Adrenal gland (tissue), 19 donors: ENCODE measurements at regions of chr5 and their contacts with region 1.

Region 1: DNA sequence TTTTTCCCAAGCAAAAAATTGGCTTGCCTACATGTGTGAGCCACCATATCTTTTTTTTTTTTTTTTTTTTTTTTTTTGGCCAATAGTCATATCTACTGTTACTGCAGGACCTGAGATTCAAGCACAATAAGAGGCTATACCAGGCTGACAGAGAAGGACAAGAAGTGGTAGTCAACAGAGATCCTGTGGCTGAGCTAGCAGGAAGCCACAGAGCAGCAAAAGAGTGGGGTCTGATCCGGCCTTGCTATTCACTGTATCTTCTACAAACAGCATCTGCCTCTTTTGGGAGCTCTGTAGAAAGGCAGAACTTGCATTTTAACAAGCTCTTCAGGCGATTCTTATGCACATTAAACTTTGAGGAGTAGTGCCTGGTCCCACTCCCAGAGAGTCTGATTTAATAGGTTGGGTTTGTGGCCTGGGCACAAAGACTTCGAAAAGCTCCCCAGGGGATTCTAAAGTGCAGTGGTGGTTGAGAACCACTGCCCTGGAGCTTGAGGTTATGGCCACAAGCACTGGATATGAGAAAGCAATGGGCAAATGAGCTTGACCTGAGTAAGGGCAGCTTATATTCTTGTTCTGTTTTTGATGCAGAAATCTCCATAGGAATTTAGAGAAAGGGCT is 162.8 kb downstream of the PIK3R1 start:
- DNase-seq: no peak
- H3K4me3 ChIP-seq: no peak overlapping the region
- H3K27ac ChIP-seq: no peak overlapping the region
- H3K4me1 ChIP-seq: no peaks in the 10 kb centered on the region
- H3K27me3 ChIP-seq: no peaks in the 10 kb centered on the region
- CTCF ChIP-seq: no peak
- POLR2A ChIP-seq: no peak

Region 2: GRCh38 chr5:67921004-67921601 is 457.2 kb before region 1 on chr5:
- intact Hi-C with region 1: no loop called
- DNase-seq: no peak
- H3K4me3 ChIP-seq: no peak overlapping the region
- H3K27ac ChIP-seq: no peak overlapping the region
- H3K4me1 ChIP-seq: no peaks in the 10 kb centered on the region
- H3K27me3 ChIP-seq: no peaks in the 10 kb centered on the region
- CTCF ChIP-seq: no peak
- POLR2A ChIP-seq: no peak

Region 3: DNA sequence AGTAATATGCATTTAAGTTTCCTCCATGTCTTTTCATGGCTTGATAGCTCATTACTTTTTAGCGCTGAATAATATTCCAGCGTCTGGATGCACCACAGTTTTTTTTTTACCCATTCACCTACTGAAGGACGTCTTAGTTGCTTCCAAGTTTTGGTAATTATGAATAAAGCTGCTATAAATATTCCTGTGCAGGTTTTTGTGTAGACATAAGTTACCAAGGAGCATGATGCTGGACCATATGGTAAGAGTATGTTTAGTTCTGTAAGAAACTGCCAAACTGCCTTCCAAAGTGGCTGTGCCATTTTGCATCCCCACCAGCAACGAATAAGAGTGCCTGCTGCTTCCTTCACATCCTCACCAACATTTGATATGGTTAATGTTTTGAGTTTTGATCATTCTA is 32.8 kb after region 1 on chr5:
- intact Hi-C with region 1: loop called in 1 of 2 experiments (anchors 5 kb)
- DNase-seq: no peak
- H3K4me3 ChIP-seq: no peak overlapping the region
- H3K27ac ChIP-seq: no peak overlapping the region
- H3K4me1 ChIP-seq: peaks cover 0 to 13% of the 10 kb centered on the region in 2 donors
- H3K27me3 ChIP-seq: no peaks in the 10 kb centered on the region
- CTCF ChIP-seq: no peak
- POLR2A ChIP-seq: no peak

Region 4: DNA sequence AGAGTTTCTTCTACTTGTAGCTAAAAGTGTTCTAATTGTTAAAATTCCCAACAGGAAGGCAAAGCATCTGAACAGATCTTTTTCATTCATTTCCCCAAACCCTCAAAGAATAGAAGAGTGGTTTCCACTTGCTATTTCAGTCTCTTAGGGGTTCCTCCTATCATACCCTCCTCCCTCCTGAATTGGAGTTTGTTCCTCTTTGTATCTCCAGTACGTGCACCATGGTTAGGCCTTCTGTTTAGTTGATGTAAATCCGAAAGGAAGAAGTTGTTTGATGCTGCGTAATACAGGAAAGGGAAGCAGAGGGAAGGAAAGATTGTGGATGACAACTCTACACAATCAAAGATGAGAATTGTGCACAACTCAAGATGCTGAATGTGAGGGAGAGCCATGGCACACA is 140.8 kb after region 1 on chr5:
- intact Hi-C with region 1: no loop called
- DNase-seq: no peak
- H3K4me3 ChIP-seq: no peak overlapping the region
- H3K27ac ChIP-seq: no peak overlapping the region
- H3K4me1 ChIP-seq: no peaks in the 10 kb centered on the region
- H3K27me3 ChIP-seq: no peaks in the 10 kb centered on the region
- CTCF ChIP-seq: no peak
- POLR2A ChIP-seq: no peak